Activated CD4-positive, alpha-beta memory T cell treated with anti-CD3 and anti-CD28 coated beads for 36 hours (primary cell): ENCODE measurements at regions of chr1 and their contacts with region 1.

Region 1: DNA sequence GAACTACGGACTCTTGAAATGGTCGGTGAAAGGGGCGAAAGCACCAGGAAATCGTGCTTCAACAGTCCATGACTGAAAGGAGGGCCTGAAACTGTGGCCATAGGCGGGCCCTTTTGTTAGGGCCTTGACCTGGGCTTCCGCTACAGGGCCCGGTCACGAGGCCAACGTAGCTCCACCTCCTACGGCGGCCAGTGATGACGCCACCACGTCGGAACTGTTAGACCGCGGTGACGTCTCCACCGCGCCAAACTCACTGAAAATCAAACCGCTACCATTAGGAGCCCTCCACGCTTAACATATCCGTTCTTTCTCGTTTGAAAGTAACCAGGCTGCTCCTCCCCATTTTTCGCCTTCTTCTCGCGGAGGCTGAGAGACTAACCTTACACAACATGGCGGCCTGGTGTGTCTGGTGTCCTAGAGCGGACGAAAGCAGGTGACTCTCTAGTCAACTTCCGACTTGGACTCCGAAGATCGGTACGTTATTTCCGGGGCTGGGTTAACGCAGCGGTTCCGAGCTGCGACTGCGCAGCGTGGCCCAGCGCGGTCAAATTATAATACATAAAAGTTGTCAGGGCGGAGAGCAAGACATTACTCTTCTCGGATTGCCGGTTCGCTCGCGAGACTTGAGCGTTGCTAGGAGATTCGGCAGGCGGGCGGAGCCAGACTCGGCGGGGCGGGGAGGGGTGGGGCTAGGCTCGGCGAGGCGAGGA is 376 bp upstream of the CACYBP start:
- DNase-seq: peak; percentile 98
- H3K4me3 Mint-ChIP-seq: no peak overlapping the region
- H3K27ac Mint-ChIP-seq: no peak overlapping the region
- H3K4me1 Mint-ChIP-seq: peaks cover 49% of the 10 kb centered on the region
- H3K27me3 Mint-ChIP-seq: no peaks in the 10 kb centered on the region

Region 2: DNA sequence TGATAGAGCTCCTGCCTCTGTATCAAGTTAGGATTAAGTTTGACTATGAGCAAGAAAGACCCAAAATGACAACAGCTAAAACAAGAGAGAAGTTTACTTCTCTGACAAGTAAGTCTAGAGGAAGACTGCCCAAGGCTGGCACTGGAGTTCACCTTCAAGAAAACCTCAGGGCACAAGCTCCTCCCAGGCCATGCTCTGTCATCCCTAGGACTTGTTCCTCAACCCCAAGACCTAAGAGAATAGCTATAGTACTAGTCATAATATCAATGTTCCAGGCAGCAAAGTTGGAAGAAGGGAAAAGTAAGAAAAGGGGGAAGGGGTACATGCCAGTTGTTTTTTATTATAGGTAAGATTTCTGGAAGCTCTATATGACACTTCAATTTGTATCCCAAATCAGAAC is 1201.3 kb before region 1 on chr1:
- CTCF ChIA-PET with region 1: no interaction called
- POLR2A ChIA-PET with region 1: no interaction called
- intact Hi-C with region 1: no loop called
- DNase-seq: no peak
- H3K4me3 Mint-ChIP-seq: no peak overlapping the region
- H3K27ac Mint-ChIP-seq: no peak overlapping the region
- H3K4me1 Mint-ChIP-seq: no peaks in the 10 kb centered on the region
- H3K27me3 Mint-ChIP-seq: no peaks in the 10 kb centered on the region

Region 3: GRCh38 chr1:173867753-173868265 is 1131.6 kb before region 1 on chr1 and contains the start of gene GAS5:
- CTCF ChIA-PET with region 1: no interaction called
- POLR2A ChIA-PET with region 1: no interaction called
- intact Hi-C with region 1: loop called (anchors 1 kb)
- DNase-seq: peak; percentile 100
- H3K4me3 Mint-ChIP-seq: peak within 1 kb of the TSS; percentile 99
- H3K27ac Mint-ChIP-seq: peak within 1 kb of the TSS; percentile 98
- H3K4me1 Mint-ChIP-seq: peaks cover 68% of the 10 kb centered on the region
- H3K27me3 Mint-ChIP-seq: peaks cover 3% of the 10 kb centered on the region
- total RNA-seq, gene GAS5: 913 to 929 TPM

Region 4: DNA sequence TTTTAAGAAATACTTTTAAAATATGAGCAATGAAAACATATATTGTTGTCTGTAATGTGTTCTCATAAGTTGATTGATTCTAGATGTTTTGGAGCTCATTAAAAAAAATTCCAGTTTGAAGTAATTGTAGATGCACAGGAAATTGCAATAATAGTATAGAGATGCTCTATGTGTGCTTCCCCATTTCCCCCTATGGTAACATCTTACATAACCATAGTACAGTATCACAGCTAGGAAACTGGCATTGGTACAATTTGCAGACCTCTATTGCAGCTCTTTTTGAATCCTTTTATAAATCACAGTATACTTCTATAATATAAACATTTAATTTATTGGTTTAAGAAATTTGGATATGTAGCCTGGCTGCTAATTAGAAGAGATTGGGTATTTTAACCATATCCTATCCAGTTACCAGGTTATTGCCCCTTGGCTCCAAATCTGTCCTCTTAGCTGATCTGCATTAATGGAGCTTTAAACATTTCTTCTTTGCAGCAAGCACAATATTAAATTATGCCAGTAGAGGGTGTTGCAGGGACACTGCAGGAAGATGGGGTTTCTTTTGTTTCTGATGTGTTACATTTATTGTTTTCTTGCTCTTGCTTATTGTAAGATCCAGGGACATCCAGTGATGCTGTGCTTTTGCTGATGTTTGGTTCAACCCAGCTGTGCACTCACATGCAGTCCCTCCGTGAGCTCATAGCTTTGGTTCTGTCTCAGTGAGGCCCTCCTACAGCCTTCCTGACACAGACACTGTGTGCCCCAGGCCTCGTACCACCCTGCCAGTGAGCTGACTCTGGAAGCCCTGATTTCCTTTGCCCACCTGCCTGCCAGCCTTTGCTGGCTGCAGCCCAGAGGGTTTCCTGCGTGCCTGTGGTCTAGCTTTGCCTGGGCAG is 736.8 kb before region 1 on chr1:
- CTCF ChIA-PET with region 1: no interaction called
- POLR2A ChIA-PET with region 1: no interaction called
- intact Hi-C with region 1: loop called (anchors 1 kb)
- DNase-seq: no peak
- H3K4me3 Mint-ChIP-seq: no peak overlapping the region
- H3K27ac Mint-ChIP-seq: no peak overlapping the region
- H3K4me1 Mint-ChIP-seq: no peaks in the 10 kb centered on the region
- H3K27me3 Mint-ChIP-seq: no peaks in the 10 kb centered on the region

Region 5: DNA sequence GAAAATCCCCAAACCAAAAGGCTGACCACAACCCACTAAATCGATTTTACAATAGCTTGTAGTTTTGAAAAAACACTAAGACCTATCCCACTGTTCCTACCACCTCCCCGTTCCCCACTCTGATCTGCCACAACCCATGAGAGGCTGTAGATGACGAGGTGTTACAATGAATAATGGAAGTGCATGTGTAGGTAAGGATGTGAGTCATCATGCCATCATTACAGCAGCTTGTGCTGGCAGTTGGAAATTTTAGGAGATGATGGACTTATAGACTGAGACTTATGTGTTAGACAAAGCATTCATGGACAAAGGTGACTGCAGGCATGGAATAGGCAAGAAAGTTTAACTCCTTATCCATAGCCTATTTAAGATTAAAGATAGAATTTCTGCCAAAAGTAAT is 184.3 kb before region 1 on chr1:
- CTCF ChIA-PET with region 1: no interaction called
- POLR2A ChIA-PET with region 1: interaction called, 6 read pairs
- intact Hi-C with region 1: loop called (anchors 5 kb)
- DNase-seq: peak; percentile 60
- H3K4me3 Mint-ChIP-seq: no peak overlapping the region
- H3K27ac Mint-ChIP-seq: no peak overlapping the region
- H3K4me1 Mint-ChIP-seq: peaks cover 33% of the 10 kb centered on the region
- H3K27me3 Mint-ChIP-seq: no peaks in the 10 kb centered on the region

Region 6: DNA sequence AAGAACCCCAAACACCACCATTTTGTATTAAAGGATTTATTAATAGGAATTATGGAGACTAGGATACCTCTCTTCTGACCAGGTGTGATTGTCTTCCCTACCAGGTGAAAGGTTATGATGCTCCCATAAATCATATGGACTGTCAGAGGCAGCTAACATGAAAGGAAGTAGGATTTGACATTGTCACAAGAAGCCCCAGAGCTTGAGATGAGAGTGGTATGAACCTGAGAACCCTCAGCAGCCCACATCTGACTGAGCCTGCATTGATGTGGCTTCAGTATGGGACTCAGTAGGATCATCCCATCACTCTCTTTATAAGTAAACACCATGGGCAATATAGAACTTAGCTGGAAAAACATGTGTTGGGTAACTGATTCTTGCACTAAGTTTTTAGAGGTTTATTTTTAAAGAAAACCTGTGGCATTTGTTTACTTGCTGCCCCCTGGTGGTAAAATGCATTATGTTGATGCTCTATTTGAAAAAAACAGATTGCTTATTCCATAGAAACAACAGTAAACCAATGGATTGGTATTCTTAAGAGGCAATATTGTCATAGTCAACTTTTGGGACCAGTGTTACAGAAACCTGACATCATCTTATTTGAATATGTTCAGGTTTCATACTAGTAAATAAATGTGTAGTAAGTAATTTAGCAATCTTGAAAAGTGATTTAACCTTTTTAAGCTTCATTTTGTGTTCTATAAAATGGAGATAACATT is 16.2 kb before region 1 on chr1:
- CTCF ChIA-PET with region 1: interaction called, 20 read pairs
- POLR2A ChIA-PET with region 1: interaction called, 13 read pairs
- intact Hi-C with region 1: no loop called
- DNase-seq: peak; percentile 42
- H3K4me3 Mint-ChIP-seq: no peak overlapping the region
- H3K27ac Mint-ChIP-seq: no peak overlapping the region
- H3K4me1 Mint-ChIP-seq: peaks cover 20% of the 10 kb centered on the region
- H3K27me3 Mint-ChIP-seq: no peaks in the 10 kb centered on the region